PC-3 (cell line): ENCODE measurements at regions of chr4 and their contacts with region 1.

Region 1: GRCh38 chr4:106329041-106329618 is 12.8 kb downstream of the AIMP1 start:
- DNase-seq: peak; percentile 51
- ATAC-seq: peak; percentile 70
- H3K4me3 ChIP-seq: no peak overlapping the region
- H3K27ac ChIP-seq: no peak overlapping the region
- H3K4me1 ChIP-seq: no peaks in the 10 kb centered on the region
- H3K27me3 ChIP-seq: no peaks in the 10 kb centered on the region
- CTCF ChIP-seq: peak; percentile 67

Region 2: DNA sequence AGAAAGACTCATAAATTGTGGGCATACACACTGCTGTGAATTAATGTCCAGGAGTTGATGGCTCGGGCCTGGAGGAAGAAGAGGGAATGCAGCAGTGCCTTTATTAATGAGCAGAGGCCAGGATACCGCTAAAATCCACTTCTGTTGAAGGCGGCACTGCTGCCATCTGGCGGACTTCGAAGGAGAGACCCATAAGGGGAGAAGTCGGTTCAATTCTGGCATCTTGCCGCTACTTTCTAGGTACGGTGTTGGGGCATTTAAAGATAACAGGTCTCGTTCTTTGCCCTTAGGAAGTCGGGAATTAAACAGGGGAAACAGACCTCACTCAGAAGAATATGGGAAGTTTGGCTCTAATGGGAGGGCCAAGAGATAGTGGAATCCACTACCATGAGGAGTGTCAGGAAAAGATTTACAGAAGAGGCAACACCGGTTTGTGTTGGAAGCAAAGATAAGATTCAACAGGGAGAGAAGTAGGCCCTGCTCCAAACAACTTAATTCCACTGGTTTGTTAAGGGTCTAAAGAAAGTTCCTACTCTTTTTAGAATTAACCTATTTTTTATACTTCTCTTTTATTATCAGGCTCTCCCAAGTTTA is 173.1 kb after region 1 on chr4:
- CTCF ChIA-PET with region 1: no interaction called
- POLR2A ChIA-PET with region 1: no interaction called
- intact Hi-C with region 1: loop called (anchors 1 kb)
- DNase-seq: peak; percentile 77
- ATAC-seq: peak; percentile 74
- H3K4me3 ChIP-seq: no peak overlapping the region
- H3K27ac ChIP-seq: no peak overlapping the region
- H3K4me1 ChIP-seq: no peaks in the 10 kb centered on the region
- H3K27me3 ChIP-seq: no peaks in the 10 kb centered on the region
- CTCF ChIP-seq: peak; percentile 80